Adrenal gland (tissue), 19 donors: ENCODE measurements at regions of chr2 and their contacts with region 1.

Region 1: GRCh38 chr2:39379643-39380524 is 57.2 kb downstream of the MAP4K3 start:
- DNase-seq: peak in 2 of 7 donors; percentile 22 to 33
- H3K4me3 ChIP-seq: no peak overlapping the region
- H3K27ac ChIP-seq: peak overlapping the region in 4 of 5 donors; percentile 21 to 48 (median 46)
- H3K4me1 ChIP-seq: peaks cover 27 to 54% of the 10 kb centered on the region in 2 donors
- H3K27me3 ChIP-seq: no peaks in the 10 kb centered on the region
- CTCF ChIP-seq: peak; percentile 35 to 73 (median 65)
- POLR2A ChIP-seq: no peak

Region 2: GRCh38 chr2:39419282-39420223 is 39.7 kb after region 1 on chr2:
- intact Hi-C with region 1: no loop called
- DNase-seq: no peak
- H3K4me3 ChIP-seq: no peak overlapping the region
- H3K27ac ChIP-seq: no peak overlapping the region
- H3K4me1 ChIP-seq: peaks cover 12 to 40% of the 10 kb centered on the region in 2 donors
- H3K27me3 ChIP-seq: no peaks in the 10 kb centered on the region
- CTCF ChIP-seq: no peak
- POLR2A ChIP-seq: no peak

Region 3: GRCh38 chr2:39516347-39517101 is 136.6 kb after region 1 on chr2:
- intact Hi-C with region 1: loop called in 1 of 2 experiments (anchors 5 kb)
- DNase-seq: peak in 5 of 7 donors; percentile 30 to 78 (median 58)
- H3K4me3 ChIP-seq: no peak overlapping the region
- H3K27ac ChIP-seq: peak overlapping the region in 2 of 5 donors; percentile 21 to 35
- H3K4me1 ChIP-seq: peaks cover 25 to 38% of the 10 kb centered on the region in 2 donors
- H3K27me3 ChIP-seq: no peaks in the 10 kb centered on the region
- CTCF ChIP-seq: no peak
- POLR2A ChIP-seq: no peak